Endothelial cell of umbilical vein (primary cell): ENCODE measurements at regions of chr1 and their contacts with region 1.

Region 1: DNA sequence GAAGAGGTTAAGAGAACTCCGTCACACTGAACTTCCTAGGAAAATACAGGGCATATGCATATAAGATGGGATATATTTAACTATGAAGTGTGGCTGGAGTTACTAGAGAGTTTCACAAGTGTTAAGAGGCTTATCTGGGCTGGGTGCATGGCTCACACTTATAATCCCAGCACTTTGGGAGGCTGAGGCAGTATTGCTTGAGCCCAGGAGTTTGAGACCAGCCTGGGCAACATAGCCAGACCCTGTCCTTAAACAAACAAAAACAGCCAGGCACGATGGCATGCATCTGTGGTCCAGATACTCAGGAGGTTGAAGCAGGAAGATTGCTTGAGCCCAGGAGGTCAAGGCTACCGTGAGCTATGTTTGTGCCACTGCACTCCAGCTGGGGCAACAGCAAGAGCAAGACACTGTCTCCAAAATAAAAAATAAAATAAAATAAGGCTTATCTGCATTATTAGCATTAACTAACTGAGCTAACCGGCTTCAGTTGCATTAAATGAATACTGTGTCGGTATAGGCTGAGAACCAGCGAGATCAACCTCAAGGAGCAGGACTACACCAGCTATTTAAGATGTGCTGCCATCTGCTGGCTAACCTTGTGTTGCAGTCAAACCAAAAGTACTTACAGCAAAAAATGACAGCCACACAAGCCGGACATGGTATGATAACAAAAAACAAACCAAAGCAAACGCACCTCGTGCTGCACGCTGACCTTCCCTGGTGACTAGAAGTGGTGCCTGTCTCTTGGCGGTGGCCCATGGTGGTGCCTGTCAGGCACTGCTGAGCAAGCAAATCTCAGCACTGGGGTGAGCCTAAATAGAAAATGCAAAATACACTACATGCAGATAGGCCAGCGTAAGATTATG is 19.7 kb upstream of the RBBP5 start:
- DNase-seq: peak; percentile 84
- H3K4me3 ChIP-seq: no peak overlapping the region
- H3K27ac ChIP-seq: no peak overlapping the region
- H3K4me1 ChIP-seq: peaks cover 19% of the 10 kb centered on the region
- H3K27me3 ChIP-seq: no peaks in the 10 kb centered on the region
- CTCF ChIP-seq: peak; percentile 77
- POLR2A ChIP-seq: no peak

Region 2: GRCh38 chr1:205121660-205122488 is 19.6 kb before region 1 on chr1 and contains the start of gene RBBP5:
- CTCF ChIA-PET with region 1: interaction called, 54 read pairs
- POLR2A ChIA-PET with region 1: no interaction called
- dilution Hi-C with region 1: no loop called
- intact Hi-C with region 1: loop called (anchors 1 kb)
- DNase-seq: peak; percentile 98
- H3K4me3 ChIP-seq: peak within 1 kb of the TSS; percentile 52 to 90 (median 72)
- H3K27ac ChIP-seq: peak within 1 kb of the TSS; percentile 91
- H3K4me1 ChIP-seq: peaks cover 12% of the 10 kb centered on the region
- H3K27me3 ChIP-seq: no peaks in the 10 kb centered on the region
- CTCF ChIP-seq: peak; percentile 71 to 77
- POLR2A ChIP-seq: peak; percentile 85
- total RNA-seq, gene RBBP5: 14.2 and 15.6 TPM in 2 replicates

Region 3: DNA sequence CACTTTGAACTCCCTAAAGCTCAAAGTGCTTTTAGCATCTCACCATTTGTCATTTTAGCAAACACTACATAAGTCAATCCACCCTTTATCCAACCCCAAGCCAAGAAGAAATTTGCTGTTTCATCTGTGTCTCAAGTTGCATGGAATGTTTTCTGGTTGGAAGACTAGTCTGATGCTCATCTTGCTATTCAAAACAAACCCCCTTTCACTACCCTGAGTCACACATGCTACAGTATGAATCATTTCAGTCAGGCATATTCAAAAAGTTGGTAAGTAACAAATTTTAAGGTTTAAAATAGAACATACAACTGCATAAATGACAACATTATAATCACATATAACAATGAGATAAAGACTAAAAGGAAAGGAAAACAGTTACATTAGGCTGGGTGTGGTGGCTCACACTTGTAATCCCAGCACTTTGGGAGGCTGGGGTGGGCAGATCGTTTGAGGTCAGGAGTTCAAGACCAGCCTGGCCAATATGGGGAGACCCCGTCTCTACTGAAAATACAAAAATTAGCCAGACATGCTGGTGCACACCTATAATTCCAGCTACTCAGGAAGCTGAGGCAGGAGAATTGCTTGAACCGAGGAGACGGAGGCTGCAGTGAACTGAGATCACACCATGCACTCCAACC is 31.4 kb after region 1 on chr1:
- CTCF ChIA-PET with region 1: interaction called, 16 read pairs
- POLR2A ChIA-PET with region 1: no interaction called
- dilution Hi-C with region 1: no loop called
- intact Hi-C with region 1: loop called (anchors 1 kb)
- DNase-seq: peak; percentile 61
- H3K4me3 ChIP-seq: no peak overlapping the region
- H3K27ac ChIP-seq: no peak overlapping the region
- H3K4me1 ChIP-seq: peaks cover 14% of the 10 kb centered on the region
- H3K27me3 ChIP-seq: no peaks in the 10 kb centered on the region
- CTCF ChIP-seq: no peak
- POLR2A ChIP-seq: no peak

Region 4: DNA sequence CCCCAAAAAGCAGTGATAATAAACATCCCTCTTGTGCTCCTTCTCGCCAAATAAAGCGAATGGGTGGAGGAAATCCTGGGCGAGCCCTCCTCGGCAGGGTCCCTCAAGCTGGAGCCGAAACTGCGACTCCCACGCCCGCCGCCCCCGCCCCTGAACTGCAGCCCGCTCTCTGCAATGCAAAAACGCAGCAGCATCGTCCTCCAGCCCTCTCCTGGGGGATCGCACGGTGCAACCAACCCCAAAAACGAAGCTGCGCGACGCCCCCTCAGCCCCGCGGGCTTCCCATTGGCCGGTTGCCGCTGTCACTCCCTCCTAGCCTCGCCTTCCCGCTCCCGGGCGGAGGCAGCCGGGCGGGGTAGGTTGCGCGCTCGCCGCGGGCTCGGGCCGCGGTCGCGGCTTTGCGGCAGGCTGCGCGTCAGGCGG is 86.1 kb after region 1 on chr1 and contains the start of gene TMCC2:
- CTCF ChIA-PET with region 1: interaction called, 8 read pairs
- POLR2A ChIA-PET with region 1: no interaction called
- dilution Hi-C with region 1: no loop called
- intact Hi-C with region 1: loop called (anchors 1 kb)
- DNase-seq: peak; percentile 81
- H3K4me3 ChIP-seq: peak within 1 kb of the TSS; percentile 49 to 64 (median 60)
- H3K27ac ChIP-seq: no peak within 1 kb of the TSS
- H3K4me1 ChIP-seq: peaks cover 17% of the 10 kb centered on the region
- H3K27me3 ChIP-seq: peaks cover 17 to 36% of the 10 kb centered on the region in 2 experiments
- CTCF ChIP-seq: peak in 1 of 2 donors; percentile 6
- POLR2A ChIP-seq: no peak
- total RNA-seq, gene TMCC2: 2.0 and 2.1 TPM in 2 replicates

Region 5: GRCh38 chr1:205243350-205244191 is 102.1 kb after region 1 on chr1:
- CTCF ChIA-PET with region 1: no interaction called
- POLR2A ChIA-PET with region 1: no interaction called
- dilution Hi-C with region 1: no loop called
- intact Hi-C with region 1: no loop called
- DNase-seq: no peak
- H3K4me3 ChIP-seq: no peak overlapping the region
- H3K27ac ChIP-seq: no peak overlapping the region
- H3K4me1 ChIP-seq: no peaks in the 10 kb centered on the region
- H3K27me3 ChIP-seq: peaks cover 0 to 2% of the 10 kb centered on the region in 2 experiments
- CTCF ChIP-seq: no peak
- POLR2A ChIP-seq: no peak